Caco-2 (cell line): ENCODE measurements at regions of chr9 and their contacts with region 1.

Region 1: DNA sequence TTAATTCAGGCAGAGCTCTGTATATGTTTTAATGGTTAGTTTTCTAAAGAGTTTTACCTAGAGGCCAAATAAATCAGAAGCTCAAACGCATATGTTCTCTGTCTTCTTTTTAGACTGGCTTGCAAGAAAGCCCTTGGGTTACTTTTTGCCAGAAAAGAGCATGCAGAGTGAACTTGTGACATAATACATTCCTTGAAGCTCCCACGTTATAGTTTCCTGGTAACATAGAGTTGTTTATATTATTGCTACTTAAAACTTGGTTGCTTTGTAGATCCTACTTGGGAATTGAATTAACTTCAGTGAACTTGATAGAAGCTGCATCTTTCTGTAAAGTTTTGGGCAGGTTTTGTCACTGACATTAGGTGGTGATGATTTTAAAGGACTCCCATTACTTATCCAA is 102.9 kb downstream of the C9orf152 start:
- DNase-seq: no peak
- H3K4me3 ChIP-seq: no peak overlapping the region
- H3K4me3 Mint-ChIP-seq: no peak overlapping the region
- H3K27ac Mint-ChIP-seq: peak overlapping the region; percentile 89
- H3K4me1 ChIP-seq: peaks cover 75% of the 10 kb centered on the region
- H3K4me1 Mint-ChIP-seq: peaks cover 41% of the 10 kb centered on the region
- H3K27me3 ChIP-seq: no peaks in the 10 kb centered on the region
- H3K27me3 Mint-ChIP-seq: no peaks in the 10 kb centered on the region
- CTCF ChIP-seq: no peak

Region 2: GRCh38 chr9:110088099-110088498 is 17.0 kb before region 1 on chr9:
- CTCF ChIA-PET with region 1: interaction called, 5 read pairs
- POLR2A ChIA-PET with region 1: interaction called, 5 read pairs
- intact Hi-C with region 1: loop called (anchors 1 kb)
- DNase-seq: peak; percentile 13 to 62
- H3K4me3 ChIP-seq: no peak overlapping the region
- H3K4me3 Mint-ChIP-seq: no peak overlapping the region
- H3K27ac Mint-ChIP-seq: peak overlapping the region; percentile 14
- H3K4me1 ChIP-seq: peaks cover 43% of the 10 kb centered on the region
- H3K4me1 Mint-ChIP-seq: peaks cover 38% of the 10 kb centered on the region
- H3K27me3 ChIP-seq: no peaks in the 10 kb centered on the region
- H3K27me3 Mint-ChIP-seq: no peaks in the 10 kb centered on the region
- CTCF ChIP-seq: no peak

Region 3: GRCh38 chr9:110116543-110116885 is 11.4 kb after region 1 on chr9:
- CTCF ChIA-PET with region 1: interaction called, 5 read pairs
- POLR2A ChIA-PET with region 1: interaction called, 6 read pairs
- intact Hi-C with region 1: loop called (anchors 1 kb)
- DNase-seq: no peak
- H3K4me3 ChIP-seq: no peak overlapping the region
- H3K4me3 Mint-ChIP-seq: no peak overlapping the region
- H3K27ac Mint-ChIP-seq: peak overlapping the region; percentile 82
- H3K4me1 ChIP-seq: peaks cover 75% of the 10 kb centered on the region
- H3K4me1 Mint-ChIP-seq: peaks cover 59% of the 10 kb centered on the region
- H3K27me3 ChIP-seq: no peaks in the 10 kb centered on the region
- H3K27me3 Mint-ChIP-seq: no peaks in the 10 kb centered on the region
- CTCF ChIP-seq: no peak